ENCODE measurements at regions of chr12 and their contacts with region 1.

Region 1: DNA sequence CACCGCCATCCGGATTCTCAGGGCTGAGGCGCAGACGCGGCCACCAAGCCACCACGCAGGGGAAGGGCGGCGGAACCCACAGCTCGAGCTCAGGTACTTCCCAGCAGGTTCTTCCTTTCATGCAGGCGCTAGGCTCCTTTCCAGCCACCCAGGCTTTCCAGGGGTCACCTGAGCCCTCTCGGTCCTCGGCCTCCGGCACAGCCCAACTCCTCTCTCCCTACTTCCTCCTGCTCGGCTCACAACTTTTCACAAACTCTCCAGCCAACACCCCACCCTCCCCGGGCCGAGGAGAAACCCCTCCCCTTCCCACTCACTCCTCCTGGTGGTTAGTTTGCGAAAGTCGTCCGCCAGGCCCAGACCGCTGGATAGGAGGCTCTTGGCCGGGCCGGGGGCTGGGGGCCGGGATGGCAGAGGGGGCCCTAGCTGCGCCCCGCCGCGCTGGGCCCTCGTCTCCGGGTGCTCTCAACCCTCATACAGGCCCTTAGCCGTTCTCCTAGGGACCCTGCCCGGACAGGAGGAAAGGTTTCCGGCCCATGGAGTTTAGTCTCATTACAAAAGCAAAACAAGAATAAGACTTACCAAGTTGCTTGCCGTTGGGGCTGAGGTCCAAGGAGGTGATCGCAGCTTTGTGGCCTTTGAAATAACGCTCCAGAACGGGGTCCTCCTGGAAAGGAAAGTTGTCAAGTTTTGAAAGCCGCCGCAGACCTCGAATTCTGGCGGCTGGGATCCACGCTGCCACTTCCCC is at the start of gene GALNT4:
- DNase-seq: peak; percentile 93
- H3K4me3 ChIP-seq: peak within 1 kb of the TSS; percentile 74 to 95 (median 94)
- H3K27ac ChIP-seq: peak within 1 kb of the TSS; percentile 87 to 92 (median 90)
- H3K4me1 ChIP-seq: peaks cover 0 to 56% (median 35%) of the 10 kb centered on the region in 4 donors
- H3K27me3 ChIP-seq: no peaks in the 10 kb centered on the region
- CTCF ChIP-seq: peak; percentile 58 to 87 (median 80)
- EP300 ChIP-seq: no peak
- POLR2A ChIP-seq: peak; percentile 40 to 63
- total RNA-seq, gene GALNT4: 3.4 to 4.8 (median 4.3) TPM

Region 2: DNA sequence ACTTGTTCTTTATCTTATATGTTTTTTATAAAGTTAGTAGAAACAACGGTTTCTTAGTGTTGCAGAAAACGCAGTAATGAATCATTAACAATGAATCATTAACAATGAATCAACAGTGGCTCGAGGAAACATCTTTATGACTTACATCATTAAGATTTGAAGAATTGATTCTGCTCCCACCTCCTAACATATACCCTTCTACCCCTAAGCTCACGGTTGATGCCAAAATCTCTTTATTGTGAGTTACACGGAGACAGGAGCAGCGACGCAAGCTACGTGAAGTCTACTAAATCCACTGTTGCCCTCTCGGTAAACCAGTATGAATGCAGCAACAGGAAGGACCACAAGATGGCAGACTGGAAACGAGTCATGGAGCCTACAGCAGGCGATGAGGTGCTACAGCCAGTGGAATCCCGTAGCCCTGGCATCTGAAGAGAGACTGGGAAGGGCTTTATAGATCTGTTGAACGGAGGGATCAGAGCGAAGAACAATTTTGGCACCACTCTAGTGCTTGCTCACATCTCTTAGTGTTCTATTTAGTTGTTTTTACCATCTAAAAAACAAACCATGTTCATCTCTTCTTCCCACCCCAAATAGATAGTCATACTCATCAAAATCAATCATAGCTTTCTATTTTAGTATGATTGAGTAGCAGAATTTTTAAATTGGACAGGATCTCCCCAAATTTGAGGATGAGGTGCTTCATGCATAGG is 505.1 kb before region 1 on chr12:
- intact Hi-C with region 1: loop called (anchors 2 kb)
- DNase-seq: peak; percentile 88
- H3K4me3 ChIP-seq: peak overlapping the region in 2 of 4 donors; percentile 30 to 31
- H3K27ac ChIP-seq: no peak overlapping the region
- H3K4me1 ChIP-seq: peaks cover 0 to 7% (median 0%) of the 10 kb centered on the region in 4 donors
- H3K27me3 ChIP-seq: no peaks in the 10 kb centered on the region
- CTCF ChIP-seq: peak; percentile 78 to 82 (median 80)
- EP300 ChIP-seq: no peak
- POLR2A ChIP-seq: no peak

Region 3: DNA sequence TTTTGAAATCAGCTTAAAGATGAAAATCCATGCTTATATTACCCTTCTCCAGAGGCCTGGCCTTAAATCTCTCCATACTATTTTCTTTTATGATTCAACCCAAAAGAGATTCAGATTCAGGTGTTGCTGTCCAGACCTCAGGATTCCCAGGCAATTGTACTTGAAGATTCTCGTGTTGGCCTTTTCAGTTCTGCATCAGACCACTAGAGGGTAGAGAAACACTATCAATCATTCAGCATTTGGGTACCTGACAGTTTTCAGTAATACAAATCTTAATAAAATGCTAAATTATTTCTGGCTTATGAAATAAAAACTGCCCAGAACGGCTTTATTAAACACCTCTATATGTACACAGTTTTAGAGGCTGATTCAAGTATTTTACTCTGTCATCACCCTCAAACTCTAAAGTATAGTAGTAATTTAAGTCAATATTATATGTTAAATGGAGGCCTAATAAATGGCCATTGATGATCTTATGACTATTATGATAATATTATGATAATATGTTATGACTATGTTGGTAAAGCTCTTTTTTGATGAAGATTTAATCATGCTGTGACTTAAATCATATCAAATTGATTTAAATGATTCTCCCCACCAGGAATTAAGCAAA is 473.5 kb before region 1 on chr12:
- intact Hi-C with region 1: loop called (anchors 5 kb)
- DNase-seq: no peak
- H3K4me3 ChIP-seq: no peak overlapping the region
- H3K27ac ChIP-seq: no peak overlapping the region
- H3K4me1 ChIP-seq: no peaks in the 10 kb centered on the region
- H3K27me3 ChIP-seq: no peaks in the 10 kb centered on the region
- CTCF ChIP-seq: peak; percentile 60 to 79 (median 71)
- EP300 ChIP-seq: no peak
- POLR2A ChIP-seq: no peak

Region 4: DNA sequence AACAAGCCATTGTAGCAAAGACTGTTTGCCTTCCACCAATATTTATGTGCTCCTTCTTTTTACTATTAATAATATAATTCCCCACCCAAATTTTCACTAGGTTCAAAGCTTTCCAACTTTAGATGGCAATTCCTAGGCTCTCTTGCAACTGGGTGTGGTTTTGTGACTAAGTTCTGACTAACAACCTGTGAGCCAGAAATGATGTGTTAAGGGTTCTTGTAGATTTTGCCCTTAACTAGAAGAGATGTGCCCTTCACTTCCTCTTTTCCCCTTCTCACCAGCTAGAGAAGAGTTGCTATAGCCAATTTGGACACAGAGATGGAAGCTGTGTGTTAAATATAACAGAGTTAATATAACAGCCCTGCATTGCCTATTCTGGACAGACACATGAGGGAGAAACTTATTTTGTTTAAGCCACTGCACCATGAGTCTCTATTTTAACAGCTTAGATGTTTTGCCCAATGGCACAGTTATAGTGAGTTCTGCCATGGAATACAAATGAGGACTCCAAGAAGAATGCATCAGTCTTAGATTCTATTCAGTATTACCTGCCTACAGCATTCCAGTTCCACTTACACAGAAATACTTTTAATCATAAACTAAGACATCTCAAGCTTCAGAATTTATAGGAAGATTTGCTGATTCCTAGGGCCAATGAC is 388.6 kb before region 1 on chr12:
- intact Hi-C with region 1: no loop called
- DNase-seq: no peak
- H3K4me3 ChIP-seq: no peak overlapping the region
- H3K27ac ChIP-seq: no peak overlapping the region
- H3K4me1 ChIP-seq: peaks cover 0 to 12% (median 0%) of the 10 kb centered on the region in 4 donors
- H3K27me3 ChIP-seq: no peaks in the 10 kb centered on the region
- CTCF ChIP-seq: no peak
- EP300 ChIP-seq: no peak
- POLR2A ChIP-seq: no peak

Region 5: DNA sequence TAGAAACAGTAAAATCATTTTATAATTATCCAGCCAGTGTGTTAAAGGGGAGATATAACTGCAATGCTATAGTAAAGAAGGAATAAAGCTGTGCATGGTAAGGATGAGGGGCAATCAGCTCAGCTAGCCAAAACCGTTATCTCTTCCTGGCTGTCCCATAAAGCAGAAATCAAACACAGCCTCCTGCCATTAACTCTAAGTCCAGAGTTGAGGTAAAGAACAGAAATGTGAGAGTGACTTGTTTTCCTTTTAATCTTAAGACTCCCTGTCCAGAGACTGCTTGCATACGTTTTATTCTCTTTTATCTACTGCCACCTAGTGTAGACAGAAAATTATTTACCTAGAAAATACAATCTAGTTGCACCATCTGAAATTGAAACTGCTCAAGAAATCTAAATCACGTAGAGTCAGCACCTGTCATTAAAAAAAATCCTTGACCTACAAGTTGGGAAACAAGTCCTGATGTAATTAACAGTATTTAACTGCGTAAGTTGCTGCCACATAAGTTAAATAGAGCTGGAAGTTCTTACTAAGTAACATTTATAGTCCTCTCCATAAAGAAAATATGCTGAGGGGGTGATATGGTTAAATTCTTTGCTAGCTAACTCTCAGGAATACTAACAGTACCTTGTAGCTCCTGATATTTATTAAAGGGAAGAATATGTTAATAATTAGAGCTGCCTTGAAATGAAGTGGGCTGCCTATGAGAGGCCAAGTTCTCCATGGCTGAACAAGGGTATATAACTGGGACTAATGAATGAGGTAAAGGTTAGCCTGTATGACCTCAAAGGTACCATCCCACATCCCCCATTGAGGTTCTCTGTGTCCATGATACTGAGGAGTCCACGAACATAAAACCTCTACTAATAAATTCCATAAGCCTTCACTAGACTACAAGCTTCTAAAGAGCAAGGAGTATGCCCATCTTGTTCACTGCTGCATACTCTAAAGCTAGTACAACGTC is 62.8 kb before region 1 on chr12:
- intact Hi-C with region 1: loop called (anchors 5 kb)
- DNase-seq: no peak
- H3K4me3 ChIP-seq: peak overlapping the region in 2 of 4 donors; percentile 6 to 25
- H3K27ac ChIP-seq: peak overlapping the region; percentile 20 to 60 (median 48)
- H3K4me1 ChIP-seq: peaks cover 0 to 16% (median 11%) of the 10 kb centered on the region in 4 donors
- H3K27me3 ChIP-seq: no peaks in the 10 kb centered on the region
- CTCF ChIP-seq: peak; percentile 33 to 75 (median 49)
- EP300 ChIP-seq: no peak
- POLR2A ChIP-seq: no peak

Region 6: GRCh38 chr12:89470741-89471509 is 53.8 kb before region 1 on chr12:
- intact Hi-C with region 1: loop called (anchors 2 kb)
- DNase-seq: no peak
- H3K4me3 ChIP-seq: no peak overlapping the region
- H3K27ac ChIP-seq: no peak overlapping the region
- H3K4me1 ChIP-seq: no peaks in the 10 kb centered on the region
- H3K27me3 ChIP-seq: no peaks in the 10 kb centered on the region
- CTCF ChIP-seq: peak in 3 of 4 experiments; percentile 16 to 47 (median 34)
- EP300 ChIP-seq: no peak
- POLR2A ChIP-seq: no peak